Right ventricle myocardium inferior (tissue), 1 donor: ENCODE measurements at regions of chr12 and their contacts with region 1.

Region 1: GRCh38 chr12:6944381-6945186 is 762 bp downstream of the C12orf57 start:
- DNase-seq: peak; percentile 96
- ATAC-seq: peak; percentile 77

Region 2: DNA sequence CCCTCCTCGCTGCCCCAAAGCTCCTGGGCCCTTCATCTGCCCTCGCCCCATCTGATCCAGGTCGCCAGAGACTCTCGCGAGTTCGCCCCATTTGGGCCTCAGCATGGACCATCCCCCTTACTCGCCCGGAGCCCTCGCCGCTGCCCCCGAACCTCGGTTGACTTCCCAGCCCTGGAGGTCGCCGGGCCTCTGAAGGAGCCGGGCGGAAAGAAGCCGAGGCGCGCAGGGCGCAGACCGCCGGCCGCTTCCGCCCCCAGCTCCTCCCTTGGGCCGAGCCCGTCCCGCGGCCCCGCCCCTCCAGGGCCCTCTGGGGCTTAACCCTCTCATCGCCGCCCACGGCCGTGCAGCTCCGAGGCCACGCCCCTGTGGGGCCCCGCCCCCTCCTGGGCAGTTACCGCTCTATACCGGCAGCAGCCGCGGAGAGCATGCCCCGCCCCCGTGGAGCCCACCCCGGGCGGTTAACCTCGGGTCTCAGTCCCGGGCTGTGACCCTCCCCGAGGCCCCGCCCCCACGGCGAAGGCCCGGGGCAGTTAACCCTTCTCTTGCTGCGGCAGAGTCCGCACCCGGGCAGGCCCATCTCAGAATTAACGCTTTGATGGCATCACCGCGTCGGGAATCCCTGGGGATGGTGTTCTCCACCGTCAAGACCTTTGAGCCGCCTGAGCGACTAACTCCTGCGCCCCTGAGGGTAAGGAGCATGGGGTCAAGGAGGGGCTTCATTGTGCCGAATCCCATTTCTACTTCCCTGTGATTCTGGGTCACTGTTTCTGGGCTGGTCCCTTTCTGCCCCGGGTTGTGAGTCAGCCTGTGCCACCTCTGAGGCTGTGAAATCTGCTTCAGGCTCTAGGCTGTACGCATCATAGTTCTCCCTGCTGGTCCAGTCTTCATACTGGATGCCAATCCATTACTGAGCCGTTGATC is 71.2 kb before region 1 on chr12 and contains the start of gene SPSB2:
- intact Hi-C with region 1: loop called (anchors 5 kb)
- DNase-seq: peak; percentile 99
- ATAC-seq: peak; percentile 95
- total RNA-seq, gene SPSB2: 3.0 TPM

Region 3: DNA sequence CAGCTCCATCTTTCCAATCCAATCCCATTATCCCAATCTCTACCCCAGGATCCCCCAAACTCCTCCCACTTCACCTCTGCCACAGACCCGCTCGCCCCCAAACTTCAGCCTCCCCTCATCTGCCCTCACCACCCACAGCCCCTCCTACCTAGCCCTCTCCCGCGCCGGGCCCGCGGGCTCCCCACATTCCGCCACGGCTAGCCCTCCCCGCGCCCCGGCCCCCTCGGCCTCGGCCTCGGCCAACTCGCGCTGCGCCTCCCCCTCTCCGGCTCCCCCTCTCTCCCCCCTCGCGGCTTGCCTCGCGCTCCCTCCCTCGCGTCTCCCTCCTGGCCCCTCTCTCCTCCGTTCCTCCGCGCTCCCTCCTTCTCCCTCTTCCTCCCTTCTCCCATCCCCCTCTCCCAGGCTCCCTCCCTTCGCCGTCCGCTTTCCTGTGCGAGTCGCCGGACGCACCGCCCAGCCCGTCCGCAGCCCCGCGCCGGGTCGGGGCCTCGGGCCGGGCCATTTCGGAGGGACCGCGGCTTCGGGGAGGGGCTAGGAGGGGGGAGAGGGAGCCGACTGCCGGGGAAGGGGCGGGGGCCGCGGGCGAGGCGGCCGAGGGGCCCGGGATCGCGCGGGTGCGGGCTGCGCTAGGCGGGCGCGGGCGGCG is 17.1 kb before region 1 on chr12 and contains the start of gene ATN1:
- intact Hi-C with region 1: loop called (anchors 2 kb)
- DNase-seq: peak; percentile 90
- ATAC-seq: peak; percentile 70
- total RNA-seq, gene ATN1: 78.9 TPM

Region 4: GRCh38 chr12:6965026-6965661 is 20.6 kb after region 1 on chr12:
- intact Hi-C with region 1: loop called (anchors 1 kb)
- DNase-seq: peak; percentile 91
- ATAC-seq: peak; percentile 80

Region 5: DNA sequence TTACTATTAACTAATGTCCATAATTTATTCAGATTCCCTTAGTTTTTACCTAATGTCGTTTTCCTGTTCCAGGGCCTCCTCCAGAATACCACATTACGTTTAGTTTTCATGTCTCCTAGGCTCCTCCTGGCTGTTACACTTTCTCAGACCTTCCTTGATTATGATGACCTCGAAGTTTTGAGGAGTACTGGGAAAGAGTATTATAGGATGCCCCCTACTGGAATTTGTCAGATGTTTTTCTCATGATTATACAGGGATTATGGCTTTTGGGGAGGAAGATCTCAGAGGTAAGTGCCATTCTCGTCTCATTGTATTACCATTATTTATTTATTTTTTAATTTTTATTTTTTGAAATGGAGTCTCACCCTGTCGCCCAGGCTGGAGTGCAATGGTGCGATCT is 98.3 kb after region 1 on chr12:
- intact Hi-C with region 1: loop called (anchors 5 kb)
- DNase-seq: no peak
- ATAC-seq: peak; percentile 42

Region 6: DNA sequence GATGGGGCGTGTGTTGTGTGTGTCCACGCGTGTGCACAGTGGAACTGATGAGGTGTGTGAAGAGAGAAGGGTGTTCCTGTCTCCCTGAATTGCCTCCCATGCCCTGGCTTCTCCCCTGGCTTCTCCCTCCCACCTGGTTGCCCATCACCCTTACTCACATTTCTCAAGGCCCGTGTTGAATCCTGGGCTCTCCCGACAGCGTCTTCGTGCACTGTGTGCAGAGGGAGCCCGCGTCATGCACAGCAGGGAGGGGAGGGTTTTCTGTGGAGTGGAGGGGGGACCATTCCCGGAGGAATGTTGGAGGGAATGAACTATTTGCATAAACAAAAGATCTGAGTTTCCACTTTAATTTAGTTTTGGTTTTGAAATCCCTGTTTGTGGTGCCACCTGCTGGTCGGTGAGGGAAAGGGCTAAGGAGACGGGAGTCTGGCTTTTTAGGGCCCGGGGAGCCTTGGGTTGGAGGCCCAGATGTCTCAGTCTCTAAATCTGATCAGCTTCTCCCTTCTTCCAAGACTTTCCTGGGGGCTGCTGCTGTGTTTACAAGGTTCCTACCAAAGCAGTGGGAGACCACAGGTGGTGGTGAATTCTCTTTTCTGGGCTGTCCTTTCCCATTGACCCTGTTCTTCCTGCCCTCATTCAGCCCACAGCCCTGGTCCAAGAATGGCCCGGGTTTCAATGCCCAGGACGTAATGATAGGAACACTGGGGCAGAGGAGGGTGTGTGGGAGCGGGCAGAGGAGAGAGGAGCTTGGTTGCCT is 147.8 kb after region 1 on chr12 and contains the start of gene C1R:
- intact Hi-C with region 1: loop called (anchors 5 kb)
- DNase-seq: peak; percentile 86
- ATAC-seq: peak; percentile 85
- total RNA-seq, gene C1R: 227 TPM

Region 7: DNA sequence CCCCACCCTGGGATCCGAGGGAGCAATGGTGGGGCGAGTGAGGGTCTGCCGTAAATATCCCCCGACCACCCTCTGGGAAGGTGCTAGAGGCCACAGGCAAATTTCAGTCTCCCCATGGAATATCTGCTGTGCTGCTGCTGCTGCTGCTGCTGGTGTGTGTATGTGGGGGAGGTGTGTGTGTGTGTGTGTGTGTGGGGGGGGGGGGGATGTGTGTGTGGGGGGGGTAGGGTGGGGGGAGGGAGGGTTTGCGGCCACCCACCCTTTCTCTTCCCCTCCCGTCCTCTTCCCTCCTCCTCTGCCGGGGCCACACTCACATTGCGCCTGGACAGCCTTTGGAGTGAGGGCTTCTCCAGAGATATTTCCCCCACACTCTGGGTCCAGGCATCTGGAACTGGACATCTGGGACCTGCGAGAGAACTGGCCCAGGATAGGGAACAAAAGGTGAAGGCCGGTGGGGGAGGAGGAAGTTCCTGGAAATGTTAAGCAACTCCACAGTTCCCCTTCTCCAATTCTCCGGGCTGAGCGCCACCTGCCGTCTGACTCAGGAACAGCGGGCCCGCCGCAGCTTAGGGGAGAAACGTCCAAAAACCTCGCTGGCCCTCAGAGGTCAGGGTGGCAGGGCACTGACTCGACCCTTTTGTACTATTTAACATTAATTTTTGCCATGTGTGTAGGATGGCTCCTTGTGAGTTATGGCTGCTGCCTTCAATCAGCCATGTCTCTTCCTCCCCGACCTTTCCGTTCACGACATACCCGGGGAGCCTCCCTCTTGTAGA is 164.4 kb after region 1 on chr12 and contains the start of gene C1RL:
- intact Hi-C with region 1: loop called (anchors 2 kb)
- DNase-seq: peak; percentile 96
- ATAC-seq: peak; percentile 89
- total RNA-seq, gene C1RL: 14.4 TPM